T-cell (primary cell): ENCODE measurements at regions of chr12 and their contacts with region 1.

Region 1: DNA sequence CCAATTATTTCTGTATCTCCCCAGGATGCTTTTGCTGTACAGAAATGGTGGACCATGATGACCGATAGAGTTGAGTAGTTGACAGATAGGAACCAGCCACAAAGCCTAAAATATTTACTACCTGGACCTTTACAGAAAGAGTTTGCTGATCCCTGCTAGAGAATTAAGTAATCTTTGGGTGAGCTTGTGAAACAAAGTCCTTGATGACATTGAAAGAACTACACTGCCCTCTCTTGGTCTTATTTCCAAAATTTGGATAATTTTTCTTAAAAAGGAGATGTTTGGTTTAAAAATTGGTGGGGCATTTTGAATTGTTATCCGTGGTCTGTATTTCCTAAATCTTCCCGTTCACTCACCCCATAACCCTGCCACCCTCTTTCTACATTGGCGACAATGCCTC is 13.7 kb upstream of the TCTN1 start:
- DNase-seq: peak in 1 of 35 experiments; percentile 71
- ATAC-seq: peak in 3 of 4 experiments; percentile 44 to 54 (median 46)
- H3K4me3 ChIP-seq: no peak overlapping the region
- H3K4me3 Mint-ChIP-seq: no peak overlapping the region
- H3K27ac ChIP-seq: no peak overlapping the region
- H3K27ac Mint-ChIP-seq: peak overlapping the region; percentile 53 to 54
- H3K4me1 ChIP-seq: peaks cover 0 to 6% of the 10 kb centered on the region in 2 experiments
- H3K4me1 Mint-ChIP-seq: peaks cover 8 to 14% (median 9%) of the 10 kb centered on the region in 3 donors
- H3K27me3 ChIP-seq: no peaks in the 10 kb centered on the region
- H3K27me3 Mint-ChIP-seq: no peaks in the 10 kb centered on the region

Region 2: GRCh38 chr12:110449799-110450497 is 150.3 kb before region 1 on chr12 and contains the start of gene ARPC3:
- CTCF ChIA-PET with region 1: interaction called, 12 to 53 read pairs
- POLR2A ChIA-PET with region 1: interaction called, 4 to 5 read pairs
- DNase-seq: peak; percentile 89 to 97 (median 94)
- ATAC-seq: peak; percentile 93 to 99 (median 98)
- H3K4me3 ChIP-seq: peak within 1 kb of the TSS; percentile 95 to 99
- H3K4me3 Mint-ChIP-seq: peak within 1 kb of the TSS; percentile 100
- H3K27ac ChIP-seq: peak within 1 kb of the TSS; percentile 89
- H3K27ac Mint-ChIP-seq: peak within 1 kb of the TSS; percentile 100
- H3K4me1 ChIP-seq: peaks cover 10 to 39% of the 10 kb centered on the region in 2 experiments
- H3K4me1 Mint-ChIP-seq: peaks cover 39 to 44% (median 43%) of the 10 kb centered on the region in 3 donors
- H3K27me3 ChIP-seq: no peaks in the 10 kb centered on the region
- H3K27me3 Mint-ChIP-seq: no peaks in the 10 kb centered on the region
- total RNA-seq, gene ARPC3: 177 to 204 (median 191) TPM

Region 3: DNA sequence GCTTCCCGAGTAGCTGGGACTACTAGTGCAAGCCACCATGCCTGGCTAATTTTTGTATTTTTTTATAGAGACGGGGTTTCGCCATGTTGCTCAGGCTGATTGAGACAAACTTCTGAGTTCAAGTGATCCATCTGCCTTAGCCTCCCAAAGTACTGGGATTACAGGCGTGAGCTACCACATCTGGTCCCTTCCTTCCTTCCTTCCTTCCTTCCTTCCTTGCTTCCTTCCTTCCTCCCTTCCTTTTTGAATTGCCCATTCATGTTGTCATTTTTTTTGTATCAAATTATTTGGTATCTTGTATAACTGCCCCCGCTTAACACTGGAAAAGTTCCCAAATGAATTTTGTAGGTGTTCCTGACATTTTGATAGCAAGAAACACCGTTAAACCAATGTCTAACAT is 86.4 kb before region 1 on chr12:
- CTCF ChIA-PET with region 1: interaction called, 4 to 29 read pairs
- POLR2A ChIA-PET with region 1: interaction called in 1 of 2 experiments, 3 read pairs
- DNase-seq: no peak
- ATAC-seq: no peak
- H3K4me3 ChIP-seq: no peak overlapping the region
- H3K4me3 Mint-ChIP-seq: no peak overlapping the region
- H3K27ac ChIP-seq: no peak overlapping the region
- H3K27ac Mint-ChIP-seq: peak overlapping the region in 1 of 2 donors; percentile 61
- H3K4me1 ChIP-seq: no peaks in the 10 kb centered on the region
- H3K4me1 Mint-ChIP-seq: peaks cover 0 to 3% (median 0%) of the 10 kb centered on the region in 3 donors
- H3K27me3 ChIP-seq: no peaks in the 10 kb centered on the region
- H3K27me3 Mint-ChIP-seq: peaks cover 0 to 2% of the 10 kb centered on the region in 2 donors

Region 4: DNA sequence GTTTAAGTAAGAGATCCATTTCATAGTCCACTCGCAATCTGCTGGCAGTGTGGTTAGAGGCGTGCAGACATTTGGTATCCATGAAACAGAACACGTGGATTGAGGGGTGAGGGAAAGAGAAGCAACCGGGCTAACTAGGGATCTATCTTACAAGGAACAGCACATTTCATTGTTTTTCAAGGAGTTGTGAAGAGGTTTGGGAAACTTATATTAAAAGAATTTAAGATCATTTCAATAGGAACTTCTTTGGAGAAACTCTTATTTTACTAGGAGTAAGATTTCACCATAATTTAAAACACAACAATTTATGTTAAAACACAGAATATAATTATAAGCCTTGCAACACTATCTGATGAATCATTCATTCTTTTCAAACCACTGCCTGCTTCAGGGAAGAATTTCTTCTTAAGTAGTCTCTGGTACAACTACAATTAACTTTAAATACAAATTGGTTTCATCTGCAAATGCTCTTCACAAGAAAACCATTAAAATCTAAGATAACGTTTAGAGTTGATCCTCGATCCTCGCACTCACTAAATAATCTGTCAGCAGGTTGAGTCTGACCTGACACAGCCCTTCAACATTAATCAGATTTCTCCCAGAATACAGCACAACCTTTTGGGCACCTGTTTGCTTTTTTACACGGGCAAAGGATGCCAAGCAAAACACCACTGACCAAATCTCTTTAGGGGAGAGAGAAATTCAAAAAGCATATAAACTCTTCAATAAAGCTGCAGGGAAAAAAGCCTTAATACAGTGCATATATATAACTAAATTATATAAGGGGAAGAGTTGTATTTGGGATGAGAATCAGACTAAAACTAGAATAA is 44.5 kb before region 1 on chr12:
- CTCF ChIA-PET with region 1: interaction called, 35 to 99 read pairs
- POLR2A ChIA-PET with region 1: no interaction called
- DNase-seq: no peak
- ATAC-seq: no peak
- H3K4me3 ChIP-seq: no peak overlapping the region
- H3K4me3 Mint-ChIP-seq: no peak overlapping the region
- H3K27ac ChIP-seq: no peak overlapping the region
- H3K27ac Mint-ChIP-seq: peak overlapping the region in 1 of 2 donors; percentile 1
- H3K4me1 ChIP-seq: peaks cover 10 to 33% of the 10 kb centered on the region in 2 experiments
- H3K4me1 Mint-ChIP-seq: peaks cover 63 to 66% (median 64%) of the 10 kb centered on the region in 3 donors
- H3K27me3 ChIP-seq: no peaks in the 10 kb centered on the region
- H3K27me3 Mint-ChIP-seq: no peaks in the 10 kb centered on the region

Region 5: GRCh38 chr12:110577717-110578521 is 22.3 kb before region 1 on chr12:
- CTCF ChIA-PET with region 1: interaction called, 4 to 17 read pairs
- POLR2A ChIA-PET with region 1: interaction called, 7 to 8 read pairs
- DNase-seq: peak in 2 of 35 experiments; percentile 15 to 60
- ATAC-seq: peak; percentile 9 to 55 (median 48)
- H3K4me3 ChIP-seq: no peak overlapping the region
- H3K4me3 Mint-ChIP-seq: peak overlapping the region; percentile 73 to 93 (median 91)
- H3K27ac ChIP-seq: peak overlapping the region; percentile 97
- H3K27ac Mint-ChIP-seq: peak overlapping the region; percentile 84 to 96
- H3K4me1 ChIP-seq: peaks cover 42 to 57% of the 10 kb centered on the region in 2 experiments
- H3K4me1 Mint-ChIP-seq: peaks cover 75 to 79% (median 77%) of the 10 kb centered on the region in 3 donors
- H3K27me3 ChIP-seq: no peaks in the 10 kb centered on the region
- H3K27me3 Mint-ChIP-seq: no peaks in the 10 kb centered on the region

Region 6: GRCh38 chr12:110613771-110614684 is 13.8 kb after region 1 on chr12 and contains the start of gene TCTN1:
- CTCF ChIA-PET with region 1: interaction called, 6 to 17 read pairs
- POLR2A ChIA-PET with region 1: interaction called in 1 of 2 experiments, 4 read pairs
- DNase-seq: peak; percentile 90 to 98 (median 94)
- ATAC-seq: peak; percentile 99 to 100 (median 100)
- H3K4me3 ChIP-seq: peak within 1 kb of the TSS; percentile 68
- H3K4me3 Mint-ChIP-seq: peak within 1 kb of the TSS; percentile 75 to 83 (median 83)
- H3K27ac ChIP-seq: peak within 1 kb of the TSS; percentile 57
- H3K27ac Mint-ChIP-seq: peak within 1 kb of the TSS; percentile 78 to 87
- H3K4me1 ChIP-seq: peaks cover 0 to 13% of the 10 kb centered on the region in 2 experiments
- H3K4me1 Mint-ChIP-seq: peaks cover 0 to 10% (median 8%) of the 10 kb centered on the region in 3 donors
- H3K27me3 ChIP-seq: no peaks in the 10 kb centered on the region
- H3K27me3 Mint-ChIP-seq: no peaks in the 10 kb centered on the region
- total RNA-seq, gene TCTN1: 8.8 to 14.1 (median 11.5) TPM

Region 7: DNA sequence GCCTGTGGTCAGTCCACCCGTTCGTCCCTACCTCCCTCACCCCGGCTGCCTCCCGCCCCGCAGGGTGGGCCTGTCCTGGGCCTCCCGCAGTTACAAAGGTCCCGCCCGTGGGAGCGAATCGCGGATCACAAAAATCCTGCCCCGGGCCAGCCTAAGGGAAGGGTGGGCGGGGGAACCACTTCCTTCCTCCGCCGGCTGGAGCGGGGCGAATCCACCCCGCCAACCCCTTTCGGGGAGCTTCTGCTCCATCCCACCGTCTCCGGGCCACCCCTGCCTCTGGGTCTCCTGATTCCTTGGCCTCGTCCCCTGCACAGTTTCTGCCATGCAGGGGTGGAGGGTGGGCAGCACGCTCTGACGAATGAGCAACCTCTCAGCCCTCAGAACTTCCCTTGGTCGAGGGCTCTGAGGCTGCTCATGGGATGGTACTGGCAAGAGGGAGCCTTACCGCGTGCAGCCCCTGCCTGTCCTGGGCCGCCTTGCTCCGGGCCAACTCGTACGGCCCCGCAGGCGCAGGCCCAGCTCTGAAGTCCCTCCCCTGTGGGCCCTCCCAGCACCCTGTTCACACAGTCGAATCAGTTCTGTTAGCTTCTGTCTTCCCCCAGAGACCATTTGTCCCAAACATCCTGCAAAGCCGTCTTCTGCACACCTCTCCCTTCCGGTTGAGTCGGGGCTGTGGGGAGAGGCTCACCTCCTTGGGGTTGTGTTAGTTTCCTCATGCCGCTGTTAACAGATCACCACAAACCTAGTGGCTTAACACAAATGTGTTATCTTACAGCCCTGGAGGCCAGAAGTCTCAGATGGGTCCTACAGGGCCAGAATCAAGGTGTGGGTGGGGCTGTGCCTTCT is 89.2 kb after region 1 on chr12:
- CTCF ChIA-PET with region 1: no interaction called
- POLR2A ChIA-PET with region 1: no interaction called
- DNase-seq: peak in 29 of 35 experiments; percentile 22 to 67 (median 37)
- ATAC-seq: peak; percentile 68 to 79 (median 76)
- H3K4me3 ChIP-seq: peak overlapping the region; percentile 63 to 67
- H3K4me3 Mint-ChIP-seq: peak overlapping the region; percentile 87 to 95 (median 95)
- H3K27ac ChIP-seq: peak overlapping the region; percentile 57
- H3K27ac Mint-ChIP-seq: peak overlapping the region; percentile 89 to 91
- H3K4me1 ChIP-seq: peaks cover 12 to 45% of the 10 kb centered on the region in 2 experiments
- H3K4me1 Mint-ChIP-seq: peaks cover 38 to 56% (median 39%) of the 10 kb centered on the region in 3 donors
- H3K27me3 ChIP-seq: no peaks in the 10 kb centered on the region
- H3K27me3 Mint-ChIP-seq: no peaks in the 10 kb centered on the region